AG04449 (cell line): ENCODE measurements at regions of chr13 and their contacts with region 1.

Region 1: DNA sequence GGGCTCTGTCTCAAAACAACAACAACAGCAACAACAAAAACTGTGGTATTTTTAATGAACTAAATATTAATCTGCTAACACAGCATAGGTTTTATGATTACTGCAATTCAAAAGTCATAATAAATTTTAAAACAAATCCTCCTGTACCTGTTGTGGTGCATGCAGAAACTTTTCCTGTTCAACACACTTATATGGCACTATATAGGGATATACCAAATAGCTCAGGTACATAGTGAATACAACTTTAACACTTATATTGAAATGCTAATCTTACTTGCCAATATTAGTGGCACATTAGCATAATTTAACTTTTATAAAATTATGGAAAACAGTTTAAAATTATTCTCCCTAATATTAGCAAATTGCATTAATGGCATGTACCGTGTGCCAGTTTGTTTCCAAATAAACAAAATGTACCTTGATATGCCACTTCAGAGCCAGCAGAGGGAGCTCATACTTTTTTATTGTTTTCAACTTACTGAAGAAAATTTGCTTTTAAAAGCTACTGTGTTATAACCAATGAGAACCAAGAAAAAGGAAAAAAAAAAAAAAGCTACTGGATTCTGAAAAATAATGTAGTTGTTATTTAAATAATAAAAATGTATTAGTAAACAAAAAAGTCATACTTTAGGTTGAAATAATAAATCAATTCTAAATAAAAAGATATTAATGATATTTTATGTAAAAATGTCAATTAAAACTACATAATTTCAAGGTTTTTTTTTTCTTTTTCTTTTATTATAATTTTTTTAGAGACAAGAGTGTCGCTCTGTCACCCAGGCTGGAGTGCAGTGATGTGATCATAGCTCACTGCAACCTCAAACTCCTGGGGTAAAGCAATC is 18.0 kb upstream of the RBM26 start:
- DNase-seq: no peak
- H3K4me3 ChIP-seq: no peak overlapping the region
- CTCF ChIP-seq: peak; percentile 32

Region 2: GRCh38 chr13:79360095-79360494 is 63.9 kb before region 1 on chr13:
- CTCF ChIA-PET with region 1: no interaction called
- POLR2A ChIA-PET with region 1: no interaction called
- DNase-seq: no peak
- H3K4me3 ChIP-seq: no peak overlapping the region
- CTCF ChIP-seq: no peak

Region 3: DNA sequence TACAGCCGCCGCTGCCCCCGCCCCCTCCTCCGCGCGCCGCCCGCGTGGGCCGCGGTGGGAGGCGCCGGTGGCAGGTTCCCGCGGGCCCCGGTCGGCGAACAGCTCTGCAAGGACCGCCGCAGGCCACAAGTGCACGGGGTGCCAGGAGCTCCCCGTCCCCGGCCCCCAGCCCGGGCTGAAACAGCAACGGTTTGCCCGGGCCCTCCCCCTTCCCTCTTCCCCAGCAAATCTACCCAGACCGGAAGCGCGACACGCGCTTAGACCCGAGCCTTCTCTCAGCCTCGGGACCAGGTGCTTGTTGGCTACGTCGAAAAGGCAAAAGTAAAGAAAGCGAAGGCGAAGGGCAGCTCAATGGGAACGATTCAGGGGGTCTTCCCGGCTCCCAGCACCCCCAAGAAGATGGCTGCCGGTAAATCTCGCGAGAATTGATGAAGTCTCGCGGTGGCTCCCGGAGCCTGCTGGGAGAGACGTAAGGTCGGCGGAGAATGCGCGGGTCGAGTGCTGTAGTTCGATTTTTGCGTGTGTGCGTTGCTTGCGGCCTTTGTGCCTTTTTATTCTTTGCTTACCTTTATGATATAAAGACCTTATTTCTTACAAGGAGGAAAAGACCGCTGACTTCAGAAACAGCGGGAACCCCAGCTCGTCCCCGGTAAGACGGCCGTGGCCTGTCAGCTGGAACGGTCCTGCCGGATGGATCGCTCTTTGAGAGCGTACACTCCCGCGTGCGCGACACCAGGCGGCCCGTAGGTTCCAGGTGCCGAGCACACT is 18.0 kb before region 1 on chr13 and contains the start of gene RBM26:
- CTCF ChIA-PET with region 1: interaction called, 45 read pairs
- POLR2A ChIA-PET with region 1: interaction called, 3 read pairs
- DNase-seq: peak; percentile 55
- H3K4me3 ChIP-seq: peak within 1 kb of the TSS; percentile 94
- CTCF ChIP-seq: peak; percentile 4

Region 4: DNA sequence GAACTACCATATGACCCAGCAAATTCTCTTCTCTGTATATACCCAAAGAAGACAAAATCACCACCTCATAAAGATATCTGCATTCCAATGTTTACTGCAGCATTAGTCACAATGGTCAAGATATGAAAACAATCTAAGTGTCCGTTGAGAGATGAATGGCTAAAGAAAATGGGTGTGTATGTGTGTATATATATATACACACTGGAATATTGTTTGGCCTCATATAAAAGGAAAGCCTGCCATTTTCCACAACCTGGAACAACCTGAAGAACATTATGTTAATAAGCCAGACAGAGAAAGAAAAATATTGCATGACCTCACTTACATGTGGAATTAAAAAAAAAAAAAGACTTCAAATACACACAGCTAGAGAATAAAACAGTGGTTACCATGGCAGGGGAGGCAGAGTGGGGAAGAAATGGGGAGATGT is 11.6 kb after region 1 on chr13:
- CTCF ChIA-PET with region 1: interaction called, 39 read pairs
- POLR2A ChIA-PET with region 1: no interaction called
- DNase-seq: peak; percentile 54
- H3K4me3 ChIP-seq: no peak overlapping the region
- CTCF ChIP-seq: no peak

Region 5: GRCh38 chr13:79485014-79485850 is 61.2 kb after region 1 on chr13:
- CTCF ChIA-PET with region 1: interaction called, 17 read pairs
- POLR2A ChIA-PET with region 1: no interaction called
- DNase-seq: peak; percentile 74
- H3K4me3 ChIP-seq: no peak overlapping the region
- CTCF ChIP-seq: no peak

Region 6: GRCh38 chr13:79528759-79529191 is 104.8 kb after region 1 on chr13:
- CTCF ChIA-PET with region 1: interaction called, 293 read pairs
- POLR2A ChIA-PET with region 1: no interaction called
- DNase-seq: no peak
- H3K4me3 ChIP-seq: no peak overlapping the region
- CTCF ChIP-seq: no peak

Region 7: GRCh38 chr13:79548902-79549301 is 124.9 kb after region 1 on chr13:
- CTCF ChIA-PET with region 1: interaction called, 155 read pairs
- POLR2A ChIA-PET with region 1: no interaction called
- DNase-seq: no peak
- H3K4me3 ChIP-seq: no peak overlapping the region
- CTCF ChIP-seq: no peak

Region 8: DNA sequence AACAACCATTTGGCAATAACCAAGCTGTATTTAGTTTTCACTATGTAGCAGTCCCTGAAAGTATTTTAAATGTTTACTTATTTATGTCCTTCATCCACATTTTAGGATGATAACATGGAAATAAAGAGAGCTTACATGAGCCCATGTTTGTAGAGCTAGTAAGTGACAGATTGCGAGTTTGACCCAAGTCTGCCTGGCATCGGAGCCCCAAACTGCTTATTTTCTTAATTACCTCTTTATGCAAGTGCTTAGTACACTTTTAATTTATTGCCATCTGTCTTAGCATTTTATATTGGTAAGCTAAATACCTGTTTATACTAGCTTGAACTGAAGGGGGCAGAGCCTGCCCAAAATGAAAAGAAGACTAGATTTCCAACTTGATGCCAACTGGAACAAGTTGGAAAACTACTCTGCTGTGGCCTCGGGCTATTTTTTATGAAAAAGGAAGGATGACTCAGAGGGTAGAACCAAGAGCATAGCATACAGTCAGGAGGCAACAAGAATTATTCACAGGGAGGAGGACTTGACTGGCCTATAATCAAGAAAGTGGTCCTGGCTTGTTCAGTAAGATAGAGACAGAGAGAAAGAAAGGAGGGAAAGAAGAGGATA is 207.1 kb after region 1 on chr13:
- CTCF ChIA-PET with region 1: no interaction called
- POLR2A ChIA-PET with region 1: no interaction called
- DNase-seq: peak; percentile 23
- H3K4me3 ChIP-seq: no peak overlapping the region
- CTCF ChIP-seq: no peak